ENCODE measurements at regions of chr3 and their contacts with region 1.

Region 1: GRCh38 chr3:32960404-32961170 is 9.1 kb downstream of the CCR4 start:
- DNase-seq: no peak
- H3K4me3 Mint-ChIP-seq: peak overlapping the region; percentile 73
- H3K27ac Mint-ChIP-seq: peak overlapping the region; percentile 99
- H3K4me1 Mint-ChIP-seq: peaks cover 62% of the 10 kb centered on the region
- H3K27me3 Mint-ChIP-seq: no peaks in the 10 kb centered on the region

Region 2: DNA sequence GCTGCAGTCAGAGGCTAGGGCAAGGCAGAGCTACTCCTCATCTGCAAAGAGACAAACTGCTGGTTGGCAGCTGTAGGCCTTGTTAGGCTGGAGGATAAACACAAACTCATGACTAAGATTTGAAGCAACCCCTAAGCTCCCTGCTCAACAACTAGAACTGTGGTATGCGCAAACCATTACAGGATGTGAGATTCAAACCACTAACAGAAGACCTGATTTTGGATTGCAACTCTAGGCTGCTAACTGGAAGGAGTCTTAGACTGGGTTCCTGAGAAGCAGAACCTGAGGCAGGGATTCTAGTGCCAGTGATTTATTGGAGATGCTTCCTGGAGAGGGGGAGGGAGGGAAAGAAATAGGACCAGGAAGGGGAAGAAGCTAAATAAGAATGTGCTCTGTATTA is 13.4 kb after region 1 on chr3:
- intact Hi-C with region 1: loop called (anchors 1 kb)
- DNase-seq: peak; percentile 44
- H3K4me3 Mint-ChIP-seq: no peak overlapping the region
- H3K27ac Mint-ChIP-seq: peak overlapping the region; percentile 28
- H3K4me1 Mint-ChIP-seq: peaks cover 51% of the 10 kb centered on the region
- H3K27me3 Mint-ChIP-seq: no peaks in the 10 kb centered on the region

Region 3: DNA sequence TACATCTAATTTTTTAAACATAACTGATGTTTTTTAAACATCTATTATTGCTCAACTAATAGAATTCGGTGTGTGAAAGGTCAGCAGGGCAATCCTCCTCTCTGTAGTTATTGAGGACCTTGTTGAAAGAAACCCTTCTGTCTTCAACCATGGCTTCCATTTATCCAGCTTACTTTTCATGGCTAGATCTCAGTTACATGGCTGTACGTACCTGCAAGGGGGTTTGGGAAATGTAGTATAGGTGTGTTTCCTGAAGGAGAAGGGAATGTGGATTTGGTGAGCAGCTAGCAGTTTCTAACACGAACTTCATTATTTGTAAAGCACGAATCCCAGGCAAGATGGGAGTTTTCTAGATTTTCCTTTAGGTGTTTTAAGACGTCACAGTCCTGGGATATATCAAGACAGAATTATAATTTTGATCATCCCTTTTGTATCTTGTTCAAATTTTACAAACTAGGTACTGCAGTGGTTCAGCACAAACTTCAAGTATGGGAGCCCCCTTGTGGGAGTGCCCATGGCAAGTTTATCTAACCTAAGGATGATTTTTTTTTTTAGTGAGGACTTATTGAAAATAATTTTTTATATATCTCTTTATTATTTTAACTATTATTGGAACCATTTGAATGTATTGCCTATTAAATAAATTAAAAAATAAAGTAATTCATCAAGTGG is 358.3 kb after region 1 on chr3:
- intact Hi-C with region 1: no loop called
- DNase-seq: no peak
- H3K4me3 Mint-ChIP-seq: no peak overlapping the region
- H3K27ac Mint-ChIP-seq: no peak overlapping the region
- H3K4me1 Mint-ChIP-seq: peaks cover 3% of the 10 kb centered on the region
- H3K27me3 Mint-ChIP-seq: peaks cover 22% of the 10 kb centered on the region

Measured in activated T-helper 2 cell treated with anti-CD3 and anti-CD28 coated beads, Interferon-gamma antibody, Interleukin-2, Interleukin-4, amounts not matched to agents 10 μg/mL and 5 μg/mL and 100 μg/mL, durations not matched to agents 14 hours and 24 hours and 36 hours (primary cell).